GM12878 (cell line): ENCODE measurements at regions of chr5 and their contacts with region 1.

Region 1: GRCh38 chr5:77709993-77710685 is 66.0 kb downstream of the TBCA start:
- DNase-seq: no peak
- ATAC-seq: 0 out of 3 replicates have a peak, but pooled peaks have one; percentile 23
- H3K4me3 ChIP-seq: no peak overlapping the region
- H3K27ac ChIP-seq: no peak overlapping the region
- H3K4me1 ChIP-seq: no peaks in the 10 kb centered on the region
- H3K27me3 ChIP-seq: no peaks in the 10 kb centered on the region
- CTCF ChIP-seq: no peak
- EP300 ChIP-seq: no peak
- POLR2A ChIP-seq: no peak
- RAD21 ChIP-seq: no peak

Region 2: DNA sequence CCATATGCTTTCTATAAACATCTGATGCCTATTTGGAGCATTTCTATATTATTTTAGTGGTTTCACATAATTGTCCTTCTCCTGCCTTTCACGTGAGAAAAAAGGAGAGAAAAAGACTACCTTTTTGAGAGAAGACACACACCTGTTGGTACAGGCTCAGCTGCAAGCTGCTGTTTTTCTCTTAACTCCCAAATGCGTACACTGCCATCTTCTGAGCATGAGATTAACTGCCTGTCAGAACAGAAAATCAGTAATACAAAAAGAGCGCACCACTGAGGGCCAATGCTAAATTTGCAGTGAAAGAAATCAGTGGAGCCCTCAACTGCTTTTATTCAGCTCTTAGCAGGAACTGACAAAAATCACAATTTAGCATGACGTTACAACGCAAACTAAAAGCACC is 272.9 kb before region 1 on chr5:
- CTCF ChIA-PET with region 1: no interaction called
- POLR2A ChIA-PET with region 1: no interaction called
- RAD21 ChIA-PET with region 1: no interaction called
- SMC1A ChIA-PET with region 1: no interaction called
- in situ Hi-C with region 1: no loop called
- intact Hi-C with region 1: no loop called
- DNase-seq: no peak
- ATAC-seq: 0 out of 3 replicates have a peak, but pooled peaks have one; percentile 40
- H3K4me3 ChIP-seq: no peak overlapping the region
- H3K27ac ChIP-seq: no peak overlapping the region
- H3K4me1 ChIP-seq: no peaks in the 10 kb centered on the region
- H3K27me3 ChIP-seq: no peaks in the 10 kb centered on the region
- CTCF ChIP-seq: peak in 2 of 3 experiments; percentile 15 to 51; a peak in 2 of 6 replicates
- EP300 ChIP-seq: no peak
- POLR2A ChIP-seq: no peak
- RAD21 ChIP-seq: peak; percentile 63

Region 3: GRCh38 chr5:77697692-77698091 is 12.4 kb before region 1 on chr5:
- CTCF ChIA-PET with region 1: interaction called, 3 read pairs
- POLR2A ChIA-PET with region 1: interaction called, 4 read pairs
- RAD21 ChIA-PET with region 1: interaction called, 3 read pairs
- SMC1A ChIA-PET with region 1: interaction called, 14 read pairs
- in situ Hi-C with region 1: no loop called
- intact Hi-C with region 1: no loop called
- DNase-seq: no peak
- ATAC-seq: no peak
- H3K4me3 ChIP-seq: no peak overlapping the region
- H3K27ac ChIP-seq: no peak overlapping the region
- H3K4me1 ChIP-seq: no peaks in the 10 kb centered on the region
- H3K27me3 ChIP-seq: no peaks in the 10 kb centered on the region
- CTCF ChIP-seq: no peak
- EP300 ChIP-seq: no peak
- POLR2A ChIP-seq: no peak
- RAD21 ChIP-seq: no peak